H1 (cell line): ENCODE measurements at regions of chr5 and their contacts with region 1.

Region 1: DNA sequence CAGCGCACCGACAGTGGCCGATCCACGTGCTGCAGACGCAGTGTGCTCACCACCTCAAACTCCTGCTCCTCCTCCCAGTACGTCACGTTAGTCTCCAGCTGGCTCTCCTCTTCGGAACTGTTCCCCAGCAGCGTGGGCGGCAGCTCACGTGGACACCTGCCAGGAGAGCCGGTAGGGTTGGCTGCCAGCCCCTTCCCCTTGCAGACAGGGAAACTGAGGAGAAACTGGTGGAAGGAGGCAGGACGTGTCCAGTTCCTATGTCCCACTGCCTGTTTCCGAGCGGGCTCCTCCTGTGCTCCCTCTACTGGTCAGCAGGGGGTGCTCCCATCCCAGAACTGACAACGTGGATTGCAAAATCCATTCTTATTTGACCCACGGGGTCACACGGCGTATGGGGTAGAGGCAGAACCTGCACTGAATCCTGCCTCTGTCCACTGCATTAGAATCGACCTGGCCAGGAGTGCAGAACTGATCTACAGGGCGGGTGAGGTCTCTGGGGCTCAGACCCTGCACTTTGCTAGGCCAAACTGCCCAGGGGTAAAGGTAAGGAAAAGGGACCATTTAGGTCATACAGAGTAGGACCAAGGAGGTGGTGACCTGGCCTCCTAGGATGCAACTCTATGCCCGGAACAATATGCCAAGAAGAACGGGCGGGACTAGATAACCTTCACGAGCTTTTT is 25.7 kb downstream of the PDGFRB start:
- DNase-seq: peak in 1 of 2 experiments; percentile 87
- H3K4me3 ChIP-seq: no peak overlapping the region
- H3K27ac ChIP-seq: no peak overlapping the region
- H3K4me1 ChIP-seq: peaks cover 5 to 12% (median 6%) of the 10 kb centered on the region in 4 experiments; a peak in 6 of 7 replicates
- H3K27me3 ChIP-seq: peaks cover 0 to 5% (median 3%) of the 10 kb centered on the region in 4 experiments; a peak in 3 of 7 replicates
- CTCF ChIP-seq: peak in 2 of 3 experiments; percentile 88 to 95; a peak in 3 of 4 replicates
- EP300 ChIP-seq: no peak
- POLR2A ChIP-seq: no peak
- RAD21 ChIP-seq: peak; percentile 92 to 93

Region 2: GRCh38 chr5:150112261-150113046 is 17.5 kb before region 1 on chr5:
- CTCF ChIA-PET with region 1: interaction called, 188 read pairs
- POLR2A ChIA-PET with region 1: no interaction called
- DNase-seq: peak in 1 of 2 experiments; percentile 41
- H3K4me3 ChIP-seq: no peak overlapping the region
- H3K27ac ChIP-seq: no peak overlapping the region
- H3K4me1 ChIP-seq: peaks cover 0 to 10% (median 2%) of the 10 kb centered on the region in 4 experiments; a peak in 3 of 7 replicates
- H3K27me3 ChIP-seq: no peaks in the 10 kb centered on the region
- CTCF ChIP-seq: no peak
- EP300 ChIP-seq: no peak
- POLR2A ChIP-seq: no peak
- RAD21 ChIP-seq: no peak

Region 3: DNA sequence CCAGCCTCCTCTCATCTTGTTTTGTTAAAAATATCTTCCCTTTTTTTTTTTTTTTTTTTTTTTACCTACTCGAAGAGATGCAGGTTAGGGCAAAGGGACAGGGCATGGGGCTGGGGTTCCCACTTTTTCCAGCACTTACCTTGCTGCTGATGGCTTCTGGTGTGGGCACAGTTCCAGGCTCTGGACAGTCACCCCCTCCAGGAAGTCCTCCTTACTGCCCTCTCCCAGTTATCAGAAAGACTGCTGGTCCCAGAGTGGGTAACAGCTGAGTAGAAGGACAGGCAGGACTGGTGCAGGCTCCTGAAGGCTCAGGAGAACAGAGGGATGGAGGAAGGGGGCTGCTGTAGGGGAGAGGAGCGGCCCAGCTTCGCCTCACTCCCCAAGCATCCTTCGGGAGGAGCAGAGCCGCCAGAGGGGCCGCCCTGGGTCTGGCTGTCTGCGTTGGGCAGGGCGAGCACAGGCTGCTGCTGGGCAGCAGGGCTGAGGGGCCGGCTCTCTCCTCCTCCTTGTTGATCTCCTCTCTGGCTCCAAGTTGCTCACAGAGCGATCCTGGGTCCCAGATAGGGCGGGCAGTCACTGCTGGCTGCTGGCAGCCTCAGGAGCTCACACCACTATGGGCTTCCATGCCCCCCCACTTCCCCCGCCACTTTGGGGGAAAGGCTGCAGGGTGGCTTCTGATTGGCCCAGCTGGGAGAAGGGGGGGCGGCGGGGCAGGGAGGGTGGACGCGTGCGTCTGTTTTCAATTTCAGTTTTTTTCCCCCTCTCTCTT is 25.5 kb after region 1 on chr5 and contains the start of gene PDGFRB:
- CTCF ChIA-PET with region 1: interaction called, 25 read pairs
- POLR2A ChIA-PET with region 1: interaction called, 4 read pairs
- DNase-seq: peak in 1 of 2 experiments; percentile 79
- H3K4me3 ChIP-seq: peak within 1 kb of the TSS; percentile 7 to 50 (median 24); a peak in 6 of 8 replicates
- H3K27ac ChIP-seq: no peak within 1 kb of the TSS
- H3K4me1 ChIP-seq: peaks cover 6 to 27% (median 13%) of the 10 kb centered on the region in 4 experiments
- H3K27me3 ChIP-seq: no peaks in the 10 kb centered on the region; a peak in 2 of 7 replicates
- CTCF ChIP-seq: no peak
- EP300 ChIP-seq: no peak
- POLR2A ChIP-seq: 0 out of 3 replicates have a peak, but pooled peaks of 1 of the 2 experiments have one; percentile 18
- RAD21 ChIP-seq: peak in 1 of 2 experiments; percentile 12; a peak in 1 of 4 replicates
- total RNA-seq, gene PDGFRB: 13.7 and 15.9 TPM in 2 replicates

Region 4: GRCh38 chr5:150209020-150209635 is 79.2 kb after region 1 on chr5:
- CTCF ChIA-PET with region 1: interaction called, 69 read pairs
- POLR2A ChIA-PET with region 1: no interaction called
- DNase-seq: no peak
- H3K4me3 ChIP-seq: no peak overlapping the region
- H3K27ac ChIP-seq: no peak overlapping the region
- H3K4me1 ChIP-seq: peaks cover 6 to 44% (median 29%) of the 10 kb centered on the region in 4 experiments
- H3K27me3 ChIP-seq: peaks cover 0 to 3% (median 0%) of the 10 kb centered on the region in 4 experiments; a peak in 1 of 7 replicates
- CTCF ChIP-seq: no peak
- EP300 ChIP-seq: no peak
- POLR2A ChIP-seq: no peak
- RAD21 ChIP-seq: no peak